Naive thymus-derived CD4-positive, alpha-beta T cell (primary cell): ENCODE measurements at regions of chr5 and their contacts with region 1.

Region 1: DNA sequence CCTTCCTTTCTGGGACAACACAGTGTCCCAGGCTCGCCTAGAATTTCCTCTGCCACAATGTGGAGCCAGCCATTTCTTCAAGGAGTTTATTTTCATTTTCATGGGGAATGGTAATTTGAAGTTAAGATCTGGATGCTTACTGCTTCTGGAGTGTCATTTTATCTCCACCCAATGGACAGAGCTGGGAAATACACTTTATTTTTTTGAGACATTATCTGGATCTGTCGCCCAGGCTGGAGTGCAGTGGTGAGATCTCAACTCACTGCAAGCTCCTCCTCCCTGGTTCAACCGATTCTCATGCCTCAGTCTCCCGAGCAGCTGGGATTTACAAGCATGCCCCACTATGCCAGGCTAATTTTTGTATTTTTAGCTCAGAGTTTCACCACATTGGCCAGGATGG is 12.7 kb upstream of the THG1L start:
- DNase-seq: peak in 6 of 9 donors; percentile 10 to 48 (median 32)
- ATAC-seq: peak; percentile 82
- H3K4me3 ChIP-seq: no peak overlapping the region
- H3K4me3 Mint-ChIP-seq: peak overlapping the region in 1 of 10 donors; percentile 75
- H3K27ac ChIP-seq: no peak overlapping the region
- H3K27ac Mint-ChIP-seq: peak overlapping the region in 5 of 9 donors; percentile 22 to 76 (median 52)
- H3K4me1 ChIP-seq: no peaks in the 10 kb centered on the region
- H3K4me1 Mint-ChIP-seq: peaks cover 7 to 46% (median 16%) of the 10 kb centered on the region in 7 donors
- H3K27me3 ChIP-seq: no peaks in the 10 kb centered on the region
- H3K27me3 Mint-ChIP-seq: peaks cover 0 to 1% (median 0%) of the 10 kb centered on the region in 5 donors

Region 2: GRCh38 chr5:157342822-157343402 is 375.6 kb before region 1 on chr5:
- CTCF ChIA-PET with region 1: no interaction called
- POLR2A ChIA-PET with region 1: no interaction called
- intact Hi-C with region 1: loop called in 1 of 2 experiments (anchors 5 kb)
- DNase-seq: peak in 3 of 9 donors; percentile 13 to 49 (median 19)
- ATAC-seq: peak; percentile 65
- H3K4me3 ChIP-seq: no peak overlapping the region
- H3K4me3 Mint-ChIP-seq: no peak overlapping the region
- H3K27ac ChIP-seq: no peak overlapping the region
- H3K27ac Mint-ChIP-seq: peak overlapping the region in 4 of 9 donors; percentile 19 to 39 (median 24)
- H3K4me1 ChIP-seq: no peaks in the 10 kb centered on the region
- H3K4me1 Mint-ChIP-seq: peaks cover 5 to 23% (median 15%) of the 10 kb centered on the region in 7 donors
- H3K27me3 ChIP-seq: no peaks in the 10 kb centered on the region
- H3K27me3 Mint-ChIP-seq: no peaks in the 10 kb centered on the region

Region 3: DNA sequence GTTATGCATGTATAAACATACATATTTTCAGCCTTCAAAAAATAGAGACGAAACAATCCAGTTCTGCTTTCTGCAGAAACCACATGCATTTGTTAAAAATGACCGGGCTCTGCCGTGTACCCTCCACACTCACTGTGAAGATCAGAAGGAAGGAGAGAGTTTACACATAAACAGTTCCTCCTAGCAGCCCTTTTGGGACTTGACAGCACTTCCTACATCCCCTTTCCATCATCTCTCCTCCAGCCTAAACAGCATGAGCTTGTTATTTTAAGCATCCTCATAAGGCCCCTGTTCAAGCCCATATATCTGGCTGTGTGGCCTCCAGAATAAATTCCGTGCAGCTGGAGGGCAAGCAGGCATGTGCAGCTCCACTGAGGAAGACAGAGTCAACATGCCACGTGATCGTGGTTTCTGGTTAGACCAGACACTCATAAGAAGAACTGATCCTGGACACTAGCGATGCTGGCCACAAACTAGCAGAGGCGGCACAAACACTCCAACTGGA is 216.3 kb before region 1 on chr5:
- CTCF ChIA-PET with region 1: no interaction called
- POLR2A ChIA-PET with region 1: no interaction called
- intact Hi-C with region 1: loop called in 1 of 2 experiments (anchors 5 kb)
- DNase-seq: no peak
- ATAC-seq: peak; percentile 81
- H3K4me3 ChIP-seq: no peak overlapping the region
- H3K4me3 Mint-ChIP-seq: no peak overlapping the region
- H3K27ac ChIP-seq: no peak overlapping the region
- H3K27ac Mint-ChIP-seq: peak overlapping the region in 1 of 9 donors; percentile 75
- H3K4me1 ChIP-seq: no peaks in the 10 kb centered on the region
- H3K4me1 Mint-ChIP-seq: peaks cover 0 to 60% (median 0%) of the 10 kb centered on the region in 7 donors
- H3K27me3 ChIP-seq: no peaks in the 10 kb centered on the region
- H3K27me3 Mint-ChIP-seq: no peaks in the 10 kb centered on the region

Region 4: DNA sequence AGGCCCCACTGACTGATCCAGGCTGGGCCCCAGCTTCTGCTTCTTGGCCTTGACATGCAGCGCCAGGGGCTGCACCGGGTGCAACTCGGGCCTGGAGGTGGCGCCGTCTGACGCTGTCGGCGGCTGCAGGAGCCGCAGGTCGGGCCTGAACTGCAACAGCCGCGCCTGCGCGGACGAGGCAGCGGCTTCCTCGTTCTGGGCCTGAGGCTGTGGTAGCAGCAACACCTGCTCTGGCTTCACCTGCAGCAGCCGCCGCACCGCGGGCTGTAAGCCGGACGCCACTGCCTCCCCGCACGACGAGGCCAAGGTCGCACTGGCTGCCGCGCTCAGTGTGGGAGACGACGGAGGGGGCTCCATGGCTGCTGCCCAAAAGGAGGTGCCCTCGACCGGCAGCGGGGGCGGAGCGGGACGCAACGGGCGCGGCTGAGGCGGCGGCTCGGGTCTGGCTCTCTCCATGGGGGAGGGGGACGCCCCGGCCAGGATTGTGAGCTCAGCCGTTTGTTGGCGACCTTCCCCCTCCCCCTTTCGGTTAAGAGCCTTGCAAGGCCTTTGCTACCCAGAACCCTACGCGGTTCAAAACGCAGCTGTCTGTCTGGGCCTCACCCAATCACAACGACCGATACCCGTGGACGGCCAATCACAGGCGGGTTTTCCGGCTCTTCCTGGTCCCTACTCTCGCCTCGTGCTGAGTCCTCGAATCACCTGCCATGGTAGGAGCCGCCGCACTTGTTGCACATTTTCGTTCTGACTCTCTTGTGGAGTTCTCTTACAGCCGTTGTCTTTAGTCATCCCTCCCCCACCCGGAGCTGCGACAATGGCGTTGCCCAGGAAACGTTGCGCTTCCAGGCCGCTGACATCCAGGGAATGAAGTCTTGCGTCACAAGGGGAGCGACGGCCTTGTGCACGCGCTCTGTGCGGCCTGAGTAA is 66.6 kb before region 1 on chr5 and contains the start of gene SOX30:
- CTCF ChIA-PET with region 1: interaction called, 3 read pairs
- POLR2A ChIA-PET with region 1: no interaction called
- intact Hi-C with region 1: loop called (anchors 1 to 5 kb)
- DNase-seq: peak; percentile 68 to 87 (median 81)
- ATAC-seq: peak; percentile 98
- H3K4me3 ChIP-seq: peak within 1 kb of the TSS; percentile 54
- H3K4me3 Mint-ChIP-seq: peak within 1 kb of the TSS; percentile 65 to 88 (median 84)
- H3K27ac ChIP-seq: peak within 1 kb of the TSS; percentile 55
- H3K27ac Mint-ChIP-seq: peak within 1 kb of the TSS; percentile 59 to 91 (median 82)
- H3K4me1 ChIP-seq: peaks cover 0 to 4% of the 10 kb centered on the region in 2 donors
- H3K4me1 Mint-ChIP-seq: peaks cover 9 to 19% (median 16%) of the 10 kb centered on the region in 7 donors
- H3K27me3 ChIP-seq: no peaks in the 10 kb centered on the region
- H3K27me3 Mint-ChIP-seq: peaks cover 0 to 3% (median 0%) of the 10 kb centered on the region in 5 donors
- total RNA-seq, gene SOX30: 0.36 TPM in 1 of 5 experiments, not detected in the others